Activated CD4-positive, alpha-beta T cell treated with anti-CD3 and anti-CD28 coated beads for 36 hours (primary cell): ENCODE measurements at regions of chr11 and their contacts with region 1.

Region 1: DNA sequence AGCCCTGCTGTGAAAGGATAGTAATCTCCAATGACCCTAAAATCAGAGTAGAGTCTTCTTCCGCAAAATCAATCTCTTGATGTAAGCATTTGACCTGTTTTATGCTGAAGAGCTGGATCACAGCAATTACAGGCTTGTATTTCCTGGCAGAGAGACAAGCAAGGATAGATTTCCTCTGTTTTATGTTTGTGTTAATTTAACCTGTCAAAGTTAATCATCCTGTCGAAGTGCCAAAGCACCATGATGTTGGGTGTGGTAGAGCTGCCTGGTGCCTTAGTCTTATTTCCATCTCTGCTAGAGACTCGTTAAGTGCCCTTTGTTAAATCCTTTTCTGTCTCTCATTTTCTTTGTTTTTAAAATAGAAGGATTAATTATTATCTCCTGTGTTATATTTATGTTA is 248.1 kb downstream of the CNTN5 start:
- DNase-seq: no peak
- ATAC-seq: no peak
- H3K4me3 Mint-ChIP-seq: no peak overlapping the region
- H3K27ac Mint-ChIP-seq: no peak overlapping the region
- H3K4me1 Mint-ChIP-seq: no peaks in the 10 kb centered on the region
- H3K27me3 Mint-ChIP-seq: no peaks in the 10 kb centered on the region

Region 2: GRCh38 chr11:99246199-99246598 is 22.7 kb before region 1 on chr11:
- CTCF ChIA-PET with region 1: no interaction called
- POLR2A ChIA-PET with region 1: no interaction called
- intact Hi-C with region 1: loop called in 1 of 2 experiments (anchors 2 kb)
- DNase-seq: no peak
- ATAC-seq: no peak
- H3K4me3 Mint-ChIP-seq: no peak overlapping the region
- H3K27ac Mint-ChIP-seq: no peak overlapping the region
- H3K4me1 Mint-ChIP-seq: no peaks in the 10 kb centered on the region
- H3K27me3 Mint-ChIP-seq: no peaks in the 10 kb centered on the region

Region 3: DNA sequence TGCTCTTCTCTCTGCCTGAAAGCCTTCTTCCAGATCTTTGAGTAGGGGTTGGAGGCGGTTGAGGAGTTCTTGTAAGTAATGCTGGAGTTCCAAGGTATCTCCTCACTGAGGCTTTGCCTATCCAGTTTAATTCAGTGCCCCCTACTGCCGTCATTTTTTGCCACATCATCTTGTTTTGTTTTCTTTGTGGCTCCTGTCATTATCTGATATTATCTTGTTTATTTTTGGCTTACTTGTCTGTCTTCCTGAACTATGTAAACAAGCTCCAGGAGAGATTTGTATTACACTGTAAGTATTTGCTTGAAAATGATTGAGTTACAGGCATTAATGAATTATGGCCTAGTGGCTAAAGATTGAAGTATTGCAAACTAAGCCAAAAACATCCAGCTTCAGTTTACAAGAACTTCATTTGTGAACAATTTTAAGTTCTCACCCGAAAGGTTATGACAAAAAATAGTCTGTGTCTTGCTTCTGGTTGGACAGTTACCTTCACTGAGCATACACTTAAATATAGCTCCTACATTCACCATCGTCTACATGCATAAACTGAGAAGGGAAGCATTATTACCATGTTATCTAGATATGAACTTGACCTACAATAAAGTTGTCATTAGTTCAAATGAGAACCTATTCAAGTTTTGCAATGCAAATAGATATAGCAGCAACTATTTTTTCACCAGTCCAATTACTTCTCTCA is 1573.0 kb after region 1 on chr11:
- CTCF ChIA-PET with region 1: no interaction called
- POLR2A ChIA-PET with region 1: no interaction called
- intact Hi-C with region 1: no loop called
- DNase-seq: no peak
- ATAC-seq: no peak
- H3K4me3 Mint-ChIP-seq: no peak overlapping the region
- H3K27ac Mint-ChIP-seq: no peak overlapping the region
- H3K4me1 Mint-ChIP-seq: no peaks in the 10 kb centered on the region
- H3K27me3 Mint-ChIP-seq: no peaks in the 10 kb centered on the region